ENCODE measurements at regions of chr22 and their contacts with region 1.

Region 1: GRCh38 chr22:43036282-43036829 is 21.4 kb upstream of the PACSIN2 start:
- DNase-seq: no peak
- H3K4me3 Mint-ChIP-seq: no peak overlapping the region
- H3K27ac Mint-ChIP-seq: no peak overlapping the region
- H3K4me1 Mint-ChIP-seq: peaks cover 6% of the 10 kb centered on the region
- H3K27me3 Mint-ChIP-seq: no peaks in the 10 kb centered on the region
- CTCF ChIP-seq: no peak

Region 2: DNA sequence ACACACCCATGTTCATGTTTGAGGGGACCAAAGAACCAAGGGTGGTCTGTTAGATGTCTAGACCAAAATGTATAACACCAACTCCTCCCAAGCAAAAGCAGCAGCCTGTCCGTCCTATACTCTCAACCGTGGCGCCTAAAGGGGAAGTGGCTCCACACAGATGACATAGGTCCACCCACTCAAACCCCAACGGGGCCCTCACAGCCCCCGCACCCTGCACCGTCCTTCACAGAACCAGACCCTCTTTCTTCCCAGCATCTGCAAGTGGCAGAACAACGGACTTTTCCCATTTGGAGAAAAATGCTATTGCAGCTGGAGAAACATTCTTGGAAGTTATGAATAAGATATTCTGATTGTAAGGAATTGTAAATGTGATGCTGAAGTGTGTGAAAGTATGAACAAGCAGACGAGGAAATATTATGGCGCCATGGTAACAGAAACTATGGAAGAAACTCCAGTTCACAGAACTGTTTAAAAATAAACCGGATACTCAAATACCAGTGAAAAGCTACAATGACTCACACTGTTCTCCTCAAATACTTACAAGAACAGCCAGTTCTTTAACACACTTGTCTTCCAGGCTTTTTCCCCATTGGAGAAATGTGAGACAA is 102.8 kb before region 1 on chr22:
- CTCF ChIA-PET with region 1: interaction called, 4 read pairs
- POLR2A ChIA-PET with region 1: no interaction called
- intact Hi-C with region 1: loop called (anchors 10 kb)
- DNase-seq: peak; percentile 78
- H3K4me3 Mint-ChIP-seq: peak overlapping the region; percentile 61
- H3K27ac Mint-ChIP-seq: peak overlapping the region; percentile 99
- H3K4me1 Mint-ChIP-seq: peaks cover 80% of the 10 kb centered on the region
- H3K27me3 Mint-ChIP-seq: no peaks in the 10 kb centered on the region
- CTCF ChIP-seq: no peak

Region 3: DNA sequence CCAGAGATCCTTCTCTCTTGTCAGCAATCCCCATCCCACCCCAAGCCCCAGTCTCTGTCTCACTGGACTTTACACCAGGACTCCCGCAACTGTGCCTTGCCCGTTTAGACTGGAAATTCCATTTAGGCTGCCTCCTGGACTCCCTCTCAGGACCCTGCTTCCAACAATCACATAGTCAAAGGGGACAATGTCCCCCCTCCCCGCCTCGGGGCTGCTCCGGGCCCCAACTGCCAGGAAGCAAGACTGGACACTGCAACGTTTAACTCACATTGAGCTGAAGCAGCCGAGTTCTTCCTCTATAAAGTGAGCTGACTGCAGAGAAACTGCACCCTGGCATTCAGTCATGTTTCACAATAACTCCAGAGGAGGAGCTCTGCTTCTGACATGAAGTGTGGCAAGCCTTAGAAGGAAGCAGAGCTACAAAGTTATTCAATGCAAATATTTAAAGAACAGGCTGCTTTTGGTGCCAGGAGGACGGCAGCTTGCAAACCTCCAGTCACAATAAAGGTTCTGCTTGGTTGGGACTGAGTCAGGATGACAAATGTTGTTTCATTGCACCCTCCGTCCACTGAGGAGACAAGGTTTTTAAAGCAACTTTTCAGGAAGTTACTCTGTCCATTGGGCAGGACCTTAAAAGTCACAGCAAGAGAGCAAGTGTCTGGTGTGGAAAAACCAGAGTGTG is 41.3 kb before region 1 on chr22:
- CTCF ChIA-PET with region 1: interaction called, 6 read pairs
- POLR2A ChIA-PET with region 1: interaction called, 8 read pairs
- intact Hi-C with region 1: loop called (anchors 1 kb)
- DNase-seq: peak; percentile 93
- H3K4me3 Mint-ChIP-seq: peak overlapping the region; percentile 73
- H3K27ac Mint-ChIP-seq: peak overlapping the region; percentile 98
- H3K4me1 Mint-ChIP-seq: peaks cover 41% of the 10 kb centered on the region
- H3K27me3 Mint-ChIP-seq: no peaks in the 10 kb centered on the region
- CTCF ChIP-seq: no peak